ENCODE measurements at regions of chr4 and their contacts with region 1.

Region 1: DNA sequence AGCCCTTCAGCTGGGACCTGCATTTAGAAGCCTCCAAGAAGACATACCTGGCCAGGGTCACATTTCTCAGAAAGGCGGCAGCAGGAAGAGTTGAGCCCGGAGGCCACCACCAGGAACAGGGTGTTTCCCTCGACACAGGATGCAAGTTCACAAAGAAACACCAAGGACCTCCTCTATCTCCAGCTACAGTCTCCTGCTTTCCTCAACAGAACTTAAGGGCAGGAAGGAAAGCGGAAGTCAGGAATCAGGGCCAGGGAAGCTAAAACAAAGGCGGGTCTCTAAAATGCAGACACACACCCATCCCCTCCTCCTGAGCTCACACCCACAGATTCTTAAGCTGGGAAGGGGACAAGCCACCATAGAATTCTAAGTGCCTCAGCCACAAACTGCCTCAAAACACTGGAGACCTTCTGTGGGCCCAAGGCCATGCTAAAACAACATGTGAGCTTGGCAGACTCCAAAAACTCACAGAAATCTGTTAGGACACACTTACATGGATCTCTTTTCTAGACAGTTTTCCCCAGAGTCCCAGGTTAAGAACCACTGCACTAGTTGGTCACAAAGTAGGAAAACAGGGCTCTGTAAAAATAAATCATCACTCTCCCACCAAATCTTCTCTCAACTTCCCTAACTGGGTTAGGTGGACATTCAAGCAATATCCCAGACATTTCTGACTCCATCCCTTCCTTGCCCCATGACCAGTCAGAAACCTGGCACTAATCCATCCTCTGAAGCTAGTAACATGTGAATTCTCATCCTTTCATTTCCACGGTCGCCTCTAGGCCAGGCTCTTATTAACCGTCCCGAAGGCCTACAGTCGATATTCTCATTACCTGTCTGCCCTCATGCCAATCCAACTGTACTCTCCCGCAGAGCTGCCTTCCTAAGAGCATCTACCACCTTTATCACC is 163.2 kb downstream of the APBB2 start:
- DNase-seq: no peak
- H3K4me3 ChIP-seq: no peak overlapping the region
- H3K27ac ChIP-seq: no peak overlapping the region
- H3K4me1 ChIP-seq: no peaks in the 10 kb centered on the region
- H3K27me3 ChIP-seq: no peaks in the 10 kb centered on the region
- CTCF ChIP-seq: no peak

Region 2: GRCh38 chr4:40976343-40976742 is 74.8 kb before region 1 on chr4:
- CTCF ChIA-PET with region 1: no interaction called
- dilution Hi-C with region 1: no loop called
- in situ Hi-C with region 1: no loop called
- intact Hi-C with region 1: loop called (anchors 5 kb)
- DNase-seq: peak; percentile 42
- H3K4me3 ChIP-seq: no peak overlapping the region
- H3K27ac ChIP-seq: no peak overlapping the region
- H3K4me1 ChIP-seq: no peaks in the 10 kb centered on the region
- H3K27me3 ChIP-seq: no peaks in the 10 kb centered on the region
- CTCF ChIP-seq: peak; percentile 60 to 75

Region 3: DNA sequence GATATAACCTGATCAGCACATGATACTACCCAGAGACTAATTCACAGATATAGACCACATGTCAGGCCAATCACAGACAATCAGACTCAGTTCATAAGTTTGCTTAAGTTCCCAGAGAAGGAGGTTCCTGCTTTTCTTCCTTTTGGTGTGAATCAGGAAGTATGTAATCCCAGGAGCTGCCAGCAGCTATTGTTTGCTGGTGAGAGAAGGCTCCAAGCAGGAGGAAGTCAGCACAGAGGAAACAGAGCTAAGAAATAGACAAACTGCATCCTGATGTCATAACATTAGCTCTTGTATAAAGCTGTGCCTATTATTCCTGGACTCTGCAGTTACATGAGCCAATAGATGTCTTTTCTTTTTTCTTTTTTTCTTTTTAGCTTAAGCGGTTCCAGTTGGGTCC is 256.5 kb after region 1 on chr4:
- CTCF ChIA-PET with region 1: no interaction called
- dilution Hi-C with region 1: no loop called
- in situ Hi-C with region 1: no loop called
- intact Hi-C with region 1: no loop called
- DNase-seq: no peak
- H3K4me3 ChIP-seq: no peak overlapping the region
- H3K27ac ChIP-seq: no peak overlapping the region
- H3K4me1 ChIP-seq: no peaks in the 10 kb centered on the region
- H3K27me3 ChIP-seq: no peaks in the 10 kb centered on the region
- CTCF ChIP-seq: no peak

Measured in mammary epithelial cell (primary cell).